WTC11 (cell line): ENCODE measurements at regions of chr22 and their contacts with region 1.

Region 1: GRCh38 chr22:22576244-22576988 is 17.4 kb upstream of the PRAME start:
- DNase-seq: peak; percentile 84
- ATAC-seq: peak; percentile 96
- H3K4me3 Mint-ChIP-seq: no peak overlapping the region
- H3K27ac Mint-ChIP-seq: no peak overlapping the region
- H3K4me1 Mint-ChIP-seq: no peaks in the 10 kb centered on the region
- H3K27me3 Mint-ChIP-seq: peaks cover 97% of the 10 kb centered on the region
- CTCF ChIP-seq: peak; percentile 72

Region 2: GRCh38 chr22:22431271-22432220 is 144.9 kb before region 1 on chr22:
- CTCF ChIA-PET with region 1: interaction called, 10 read pairs
- POLR2A ChIA-PET with region 1: no interaction called
- DNase-seq: peak; percentile 79
- ATAC-seq: peak; percentile 98
- H3K4me3 Mint-ChIP-seq: no peak overlapping the region
- H3K27ac Mint-ChIP-seq: no peak overlapping the region
- H3K4me1 Mint-ChIP-seq: 0 out of 2 replicates have a peak, but pooled peaks cover 3% of the 10 kb centered on the region
- H3K27me3 Mint-ChIP-seq: peaks cover 100% of the 10 kb centered on the region
- CTCF ChIP-seq: no peak; the same call in 1 of the 2 replicates

Region 3: DNA sequence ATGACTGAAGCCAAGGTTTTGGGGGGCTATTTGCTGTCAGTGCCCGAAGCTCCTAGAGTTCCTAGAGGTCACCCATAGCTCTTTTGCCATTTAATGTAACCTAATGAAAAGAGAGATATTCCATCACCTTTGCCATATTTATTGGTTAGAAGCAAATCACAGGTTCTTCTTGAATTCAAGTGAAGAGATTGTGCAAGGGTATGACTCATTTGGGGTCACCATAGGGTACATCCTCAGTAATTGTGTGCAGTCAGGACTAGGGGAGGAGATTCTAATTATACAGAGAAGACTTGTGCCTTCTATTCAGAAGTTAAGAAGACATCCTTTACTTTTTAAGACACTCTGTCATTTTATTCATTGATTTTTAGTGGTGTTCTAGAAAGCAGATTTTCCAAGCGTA is 10.4 kb before region 1 on chr22:
- CTCF ChIA-PET with region 1: interaction called, 31 read pairs
- POLR2A ChIA-PET with region 1: no interaction called
- DNase-seq: no peak
- ATAC-seq: no peak
- H3K4me3 Mint-ChIP-seq: no peak overlapping the region
- H3K27ac Mint-ChIP-seq: no peak overlapping the region
- H3K4me1 Mint-ChIP-seq: no peaks in the 10 kb centered on the region
- H3K27me3 Mint-ChIP-seq: peaks cover 94% of the 10 kb centered on the region
- CTCF ChIP-seq: no peak

Region 4: GRCh38 chr22:22616636-22617035 is 40.2 kb after region 1 on chr22:
- CTCF ChIA-PET with region 1: interaction called, 23 read pairs
- POLR2A ChIA-PET with region 1: no interaction called
- DNase-seq: no peak
- ATAC-seq: no peak
- H3K4me3 Mint-ChIP-seq: no peak overlapping the region
- H3K27ac Mint-ChIP-seq: no peak overlapping the region
- H3K4me1 Mint-ChIP-seq: peaks cover 6% of the 10 kb centered on the region
- H3K27me3 Mint-ChIP-seq: peaks cover 97% of the 10 kb centered on the region
- CTCF ChIP-seq: no peak

Region 5: GRCh38 chr22:22687638-22688500 is 111.5 kb after region 1 on chr22:
- CTCF ChIA-PET with region 1: interaction called, 10 read pairs
- POLR2A ChIA-PET with region 1: no interaction called
- DNase-seq: peak; percentile 24
- ATAC-seq: peak; percentile 82
- H3K4me3 Mint-ChIP-seq: no peak overlapping the region
- H3K27ac Mint-ChIP-seq: no peak overlapping the region
- H3K4me1 Mint-ChIP-seq: peaks cover 4% of the 10 kb centered on the region; the same call in 1 of the 2 replicates
- H3K27me3 Mint-ChIP-seq: peaks cover 95% of the 10 kb centered on the region
- CTCF ChIP-seq: peak; percentile 39

Region 6: GRCh38 chr22:22753526-22754267 is 177.3 kb after region 1 on chr22:
- CTCF ChIA-PET with region 1: interaction called, 12 read pairs
- POLR2A ChIA-PET with region 1: no interaction called
- DNase-seq: peak; percentile 83
- ATAC-seq: peak; percentile 97
- H3K4me3 Mint-ChIP-seq: no peak overlapping the region
- H3K27ac Mint-ChIP-seq: no peak overlapping the region
- H3K4me1 Mint-ChIP-seq: no peaks in the 10 kb centered on the region
- H3K27me3 Mint-ChIP-seq: peaks cover 96% of the 10 kb centered on the region
- CTCF ChIP-seq: peak; percentile 33; the same call in 1 of the 2 replicates